ENCODE measurements at regions of chr10 and their contacts with region 1.

Region 1: GRCh38 chr10:32055813-32056600 is at the start of gene KIF5B:
- DNase-seq: peak; percentile 27 to 90
- H3K4me3 ChIP-seq: peak within 1 kb of the TSS; percentile 79 to 98
- H3K27ac ChIP-seq: peak within 1 kb of the TSS; percentile 98 to 100
- H3K4me1 ChIP-seq: peaks cover 0 to 16% of the 10 kb centered on the region in 2 donors
- H3K27me3 ChIP-seq: no peaks in the 10 kb centered on the region
- CTCF ChIP-seq: no peak
- total RNA-seq, gene KIF5B: 78.1 TPM

Region 2: DNA sequence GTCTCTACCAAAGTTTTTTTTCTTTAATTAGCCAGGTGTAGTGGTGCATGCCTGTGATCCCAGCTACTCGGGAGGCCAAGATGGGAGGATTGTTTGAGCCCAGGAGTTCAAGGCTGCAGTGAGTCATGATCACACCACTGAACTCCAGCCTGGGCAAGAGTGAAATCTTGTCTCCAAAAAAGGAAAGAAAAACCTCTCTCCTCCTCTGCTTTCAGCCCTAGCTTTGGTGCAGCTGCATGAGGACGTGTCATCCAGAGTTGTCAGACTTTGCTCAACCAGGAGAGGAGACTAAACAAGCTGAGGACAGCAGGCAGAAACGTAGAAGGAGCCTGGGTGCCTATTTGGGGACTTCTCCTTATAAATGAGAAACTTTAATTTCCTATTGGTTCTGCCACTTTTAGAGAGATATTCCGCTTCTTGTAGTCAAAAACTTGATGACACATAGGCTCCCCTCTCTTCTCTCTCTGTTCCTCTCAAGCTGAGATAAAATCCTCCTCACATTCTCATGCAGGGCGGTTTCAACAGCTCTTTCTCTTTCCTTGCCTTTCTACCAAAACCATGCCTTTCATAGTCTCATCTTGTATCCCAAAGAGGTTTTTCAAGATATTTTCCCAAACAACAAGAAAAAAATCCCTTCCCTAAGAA is 332.8 kb before region 1 on chr10:
- intact Hi-C with region 1: no loop called
- DNase-seq: no peak
- H3K4me3 ChIP-seq: no peak overlapping the region
- H3K27ac ChIP-seq: no peak overlapping the region
- H3K4me1 ChIP-seq: no peaks in the 10 kb centered on the region
- H3K27me3 ChIP-seq: no peaks in the 10 kb centered on the region
- CTCF ChIP-seq: no peak

Region 3: DNA sequence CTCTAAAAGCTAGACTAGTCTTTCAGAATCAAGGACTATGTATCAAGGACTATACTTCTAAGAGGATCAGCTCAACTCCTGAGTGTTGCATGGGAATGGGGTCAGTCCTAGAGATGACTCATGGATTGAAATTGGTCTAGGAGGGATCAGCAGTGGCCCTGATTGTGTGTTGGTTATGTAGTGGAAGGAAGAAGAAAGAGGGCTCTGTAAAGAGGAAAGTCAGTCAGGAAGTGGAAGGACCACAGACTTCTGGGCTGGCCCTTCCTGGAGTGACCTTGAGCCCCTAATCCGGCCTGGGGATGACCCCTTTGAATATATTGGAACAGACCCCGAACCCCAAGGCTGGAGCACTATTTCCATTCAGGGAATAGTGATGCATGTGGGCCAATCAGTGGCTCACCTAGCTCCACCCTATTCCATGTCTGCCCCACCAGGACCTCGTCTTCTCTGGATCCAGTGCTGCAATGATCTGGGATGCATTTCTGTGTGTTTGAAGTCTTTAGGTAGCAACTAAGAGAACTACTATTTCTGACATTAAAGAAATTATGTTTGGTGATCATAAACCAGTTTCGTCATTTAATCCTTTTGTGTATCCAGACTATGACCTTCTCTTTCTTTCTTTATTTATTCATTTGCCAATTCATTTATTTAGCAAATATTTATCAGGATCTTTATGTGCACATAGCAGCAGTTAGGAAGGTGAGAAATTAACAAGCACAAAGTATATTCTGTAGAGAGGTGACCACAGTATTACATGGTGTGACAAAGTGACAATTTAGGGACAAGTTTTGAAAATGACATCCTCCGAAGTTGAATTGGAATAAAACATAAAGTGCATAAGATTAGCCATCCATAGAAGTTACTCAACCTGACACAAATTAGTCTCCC is 48.9 kb after region 1 on chr10:
- intact Hi-C with region 1: loop called (anchors 5 kb)
- DNase-seq: no peak
- H3K4me3 ChIP-seq: no peak overlapping the region
- H3K27ac ChIP-seq: peak overlapping the region; percentile 38 to 57
- H3K4me1 ChIP-seq: peaks cover 0 to 13% of the 10 kb centered on the region in 2 donors
- H3K27me3 ChIP-seq: no peaks in the 10 kb centered on the region
- CTCF ChIP-seq: no peak

Region 4: GRCh38 chr10:32139223-32140073 is 83.4 kb after region 1 on chr10:
- intact Hi-C with region 1: loop called (anchors 1 kb)
- DNase-seq: peak; percentile 87 to 95
- H3K4me3 ChIP-seq: no peak overlapping the region
- H3K27ac ChIP-seq: peak overlapping the region; percentile 71 to 79
- H3K4me1 ChIP-seq: peaks cover 5 to 10% of the 10 kb centered on the region in 2 donors
- H3K27me3 ChIP-seq: no peaks in the 10 kb centered on the region
- CTCF ChIP-seq: peak in 2 of 3 experiments; percentile 27 to 59

Region 5: DNA sequence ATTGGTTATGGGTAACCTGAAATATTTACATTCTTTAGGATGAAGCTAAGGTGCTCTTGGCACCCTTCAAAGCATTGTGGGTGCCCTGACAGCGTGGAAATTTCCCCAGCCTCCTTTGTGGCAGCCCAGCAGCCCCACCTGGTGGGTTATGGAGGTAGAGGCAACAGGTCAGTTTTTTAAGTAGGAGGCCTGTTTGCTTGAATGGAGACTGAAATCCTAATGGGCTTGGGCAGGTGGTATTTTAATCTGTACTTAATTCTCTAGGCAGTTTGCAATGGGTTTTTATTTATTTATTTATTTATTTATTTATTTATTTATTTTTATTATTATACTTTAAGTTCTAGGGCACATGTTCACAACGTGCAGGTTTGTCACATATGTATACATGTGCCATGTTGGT is 151.5 kb after region 1 on chr10:
- intact Hi-C with region 1: loop called (anchors 5 kb)
- DNase-seq: peak; percentile 12 to 69
- H3K4me3 ChIP-seq: no peak overlapping the region
- H3K27ac ChIP-seq: no peak overlapping the region
- H3K4me1 ChIP-seq: no peaks in the 10 kb centered on the region
- H3K27me3 ChIP-seq: no peaks in the 10 kb centered on the region
- CTCF ChIP-seq: peak; percentile 61 to 76 (median 63)